A673 (cell line): ENCODE measurements at regions of chr4 and their contacts with region 1.

Region 1: DNA sequence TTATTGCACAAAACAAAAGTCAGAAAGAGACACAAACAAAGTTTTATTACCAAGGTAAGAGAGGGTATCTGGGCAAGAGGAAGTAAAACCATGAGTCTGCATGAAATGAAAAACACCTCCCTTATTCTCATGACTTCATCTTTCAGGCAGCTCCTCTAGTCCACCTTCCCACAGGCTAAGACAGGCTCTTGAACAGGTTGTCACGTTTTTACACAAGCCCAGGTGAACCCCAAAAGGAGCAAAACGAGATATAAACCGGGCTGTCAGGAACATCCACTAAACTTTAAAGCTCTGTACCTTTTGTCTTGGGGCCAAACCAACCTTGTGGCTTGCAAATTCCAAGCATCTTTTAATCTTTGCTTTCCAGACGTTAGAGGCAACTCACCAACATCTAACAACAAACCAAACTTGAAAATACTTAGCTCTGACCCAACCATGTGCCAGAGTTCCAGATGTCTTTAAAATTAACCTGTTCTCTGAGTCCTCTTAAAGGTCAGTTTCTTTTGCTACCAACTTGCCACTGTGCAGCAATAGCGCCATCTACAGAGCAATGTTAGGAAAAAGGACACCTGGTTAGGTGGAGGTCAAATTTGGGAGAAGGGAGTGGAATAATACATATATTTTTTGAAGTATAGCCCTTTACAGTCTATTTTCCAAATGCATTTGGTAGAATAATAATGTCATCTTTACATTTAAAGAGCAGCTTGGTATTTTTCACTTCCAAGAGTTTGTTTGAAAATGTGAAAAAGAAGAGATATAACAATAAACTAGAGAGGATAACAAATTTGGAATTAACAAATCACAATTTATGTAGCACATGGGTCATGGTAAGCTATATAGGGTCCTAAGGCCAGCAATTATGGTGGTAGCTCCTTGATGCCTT is 73.1 kb downstream of the QRFPR start:
- DNase-seq: peak; percentile 73
- H3K4me3 ChIP-seq: no peak overlapping the region
- H3K27ac ChIP-seq: no peak overlapping the region
- H3K4me1 ChIP-seq: no peaks in the 10 kb centered on the region
- H3K27me3 ChIP-seq: no peaks in the 10 kb centered on the region
- CTCF ChIP-seq: peak; percentile 88

Region 2: DNA sequence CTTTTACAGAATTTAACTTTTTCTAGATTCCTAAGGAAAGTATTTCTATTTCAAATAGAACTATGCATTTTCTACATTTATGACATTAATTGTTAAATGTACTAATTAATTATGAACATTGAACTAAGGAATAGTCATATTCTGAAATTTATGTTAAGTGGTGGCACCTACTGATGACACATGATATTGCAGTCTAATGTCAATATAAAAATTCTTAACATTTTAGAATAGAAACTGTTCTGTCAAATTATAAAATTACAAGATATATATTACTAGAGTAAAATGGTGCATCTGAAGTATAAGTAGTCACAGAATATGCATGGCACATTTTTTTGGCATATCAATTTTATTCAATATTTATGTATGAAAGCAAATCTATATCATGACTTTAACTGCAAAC is 195.2 kb before region 1 on chr4:
- CTCF ChIA-PET with region 1: no interaction called
- POLR2A ChIA-PET with region 1: no interaction called
- intact Hi-C with region 1: loop called (anchors 10 kb)
- DNase-seq: no peak
- H3K4me3 ChIP-seq: no peak overlapping the region
- H3K27ac ChIP-seq: no peak overlapping the region
- H3K4me1 ChIP-seq: no peaks in the 10 kb centered on the region
- H3K27me3 ChIP-seq: no peaks in the 10 kb centered on the region
- CTCF ChIP-seq: peak; percentile 60

Region 3: DNA sequence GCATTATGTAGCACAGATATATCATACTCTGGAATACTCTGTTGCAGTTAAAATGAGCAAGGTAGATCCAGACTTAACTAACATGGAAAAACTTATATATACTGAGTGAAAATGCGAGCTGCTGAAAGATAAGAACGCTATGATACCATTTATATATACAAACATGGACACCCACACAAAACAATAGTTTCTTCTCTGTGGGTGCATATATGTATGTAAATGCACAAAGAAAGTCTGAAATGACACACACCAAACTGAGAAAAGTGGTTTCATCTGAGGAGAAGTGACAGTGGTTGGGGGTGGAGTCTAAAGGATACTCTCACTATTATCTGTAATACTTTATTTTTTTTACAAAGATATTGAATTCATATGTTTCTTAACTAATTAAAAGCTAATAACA is 1506.7 kb after region 1 on chr4:
- CTCF ChIA-PET with region 1: no interaction called
- POLR2A ChIA-PET with region 1: no interaction called
- intact Hi-C with region 1: no loop called
- DNase-seq: no peak
- H3K4me3 ChIP-seq: no peak overlapping the region
- H3K27ac ChIP-seq: no peak overlapping the region
- H3K4me1 ChIP-seq: no peaks in the 10 kb centered on the region
- H3K27me3 ChIP-seq: no peaks in the 10 kb centered on the region
- CTCF ChIP-seq: no peak